Motor neuron (in vitro differentiated cells): ENCODE measurements at regions of chr2 and their contacts with region 1.

Region 1: GRCh38 chr2:121076885-121077549 is 208.0 kb downstream of the TFCP2L1 start:
- ATAC-seq: peak in 1 of 8 experiments; percentile 5
- H3K4me3 ChIP-seq: no peak overlapping the region
- H3K27ac ChIP-seq: no peak overlapping the region
- H3K4me1 ChIP-seq: peaks cover 27 to 33% of the 10 kb centered on the region in 2 donors

Region 2: GRCh38 chr2:120343433-120344105 is 733.4 kb before region 1 on chr2:
- in situ Hi-C with region 1: loop called in 4 of 9 experiments (anchors 25 kb)
- ATAC-seq: peak; percentile 52 to 84 (median 63)
- H3K4me3 ChIP-seq: peak overlapping the region in 1 of 5 donors; percentile 10
- H3K27ac ChIP-seq: no peak overlapping the region
- H3K4me1 ChIP-seq: peaks cover 6 to 14% of the 10 kb centered on the region in 2 donors

Region 3: DNA sequence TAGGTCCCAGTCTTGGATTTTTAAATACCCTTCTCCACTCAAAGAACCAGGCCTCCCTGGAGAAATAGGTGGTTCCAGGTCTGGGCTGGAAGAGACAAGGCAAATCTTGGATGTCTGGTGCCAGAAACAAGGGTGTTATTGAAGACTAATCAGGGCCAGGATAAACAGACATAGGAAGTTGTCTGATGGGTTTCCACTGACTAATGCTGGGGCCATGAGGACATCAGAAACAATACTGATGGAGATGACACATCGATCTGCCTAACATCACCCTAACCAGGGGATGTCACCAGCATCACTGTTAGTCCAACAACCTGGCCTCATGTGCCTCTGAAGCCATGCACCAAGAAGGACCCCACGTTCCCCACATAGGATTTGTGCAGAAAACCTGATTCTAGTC is 383.9 kb before region 1 on chr2:
- in situ Hi-C with region 1: loop called (anchors 5 to 10 kb)
- ATAC-seq: no peak
- H3K4me3 ChIP-seq: no peak overlapping the region
- H3K27ac ChIP-seq: no peak overlapping the region
- H3K4me1 ChIP-seq: peaks cover 0 to 3% of the 10 kb centered on the region in 2 donors

Region 4: DNA sequence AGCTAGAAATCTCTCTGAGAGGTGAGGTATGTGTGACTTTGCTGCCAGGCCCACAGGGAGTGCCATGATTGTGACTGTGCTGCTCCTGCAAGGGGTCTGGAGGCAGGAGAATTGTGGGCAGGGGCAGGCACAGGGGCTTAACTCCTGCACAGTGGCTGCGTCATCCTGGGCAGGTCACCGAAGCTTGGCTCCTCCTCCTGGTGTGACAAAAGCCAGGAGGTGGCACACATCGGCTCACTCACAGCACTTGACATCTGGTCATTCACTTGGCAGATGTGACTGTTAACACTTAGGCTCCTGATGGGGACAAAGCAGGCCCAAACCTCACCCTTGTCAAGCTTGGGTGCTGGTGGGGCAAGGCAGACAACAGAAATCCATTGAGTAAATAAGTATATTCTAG is 377.7 kb before region 1 on chr2:
- in situ Hi-C with region 1: loop called (anchors 5 to 10 kb)
- ATAC-seq: no peak
- H3K4me3 ChIP-seq: no peak overlapping the region
- H3K27ac ChIP-seq: no peak overlapping the region
- H3K4me1 ChIP-seq: peaks cover 15 to 20% of the 10 kb centered on the region in 2 donors

Region 5: GRCh38 chr2:121333834-121334558 is 257.0 kb after region 1 on chr2:
- in situ Hi-C with region 1: loop called in 1 of 9 experiments (anchors 25 kb)
- ATAC-seq: peak in 2 of 8 experiments; percentile 22 to 64
- H3K4me3 ChIP-seq: no peak overlapping the region
- H3K27ac ChIP-seq: no peak overlapping the region
- H3K4me1 ChIP-seq: peaks cover 9 to 11% of the 10 kb centered on the region in 2 donors